ENCODE measurements at regions of chr7 and their contacts with region 1.

Region 1: GRCh38 chr7:20402747-20403230 is 72.1 kb downstream of the ITGB8 start:
- DNase-seq: no peak

Region 2: GRCh38 chr7:20330240-20330927 is 72.4 kb before region 1 on chr7 and contains the start of gene ITGB8:
- intact Hi-C with region 1: loop called (anchors 5 kb)
- DNase-seq: peak; percentile 77 to 98 (median 90)